Activated naive CD4-positive, alpha-beta T cell treated with anti-CD3 and anti-CD28 coated beads for 36 hours (primary cell): ENCODE measurements at regions of chr11 and their contacts with region 1.

Region 1: GRCh38 chr11:78149646-78150045 is 10.2 kb upstream of the ALG8 start:
- DNase-seq: peak; percentile 41
- H3K4me3 Mint-ChIP-seq: no peak overlapping the region
- H3K27ac Mint-ChIP-seq: no peak overlapping the region
- H3K4me1 Mint-ChIP-seq: no peaks in the 10 kb centered on the region
- H3K27me3 Mint-ChIP-seq: no peaks in the 10 kb centered on the region

Region 2: GRCh38 chr11:78219493-78220217 is 70.0 kb after region 1 on chr11:
- CTCF ChIA-PET with region 1: no interaction called
- intact Hi-C with region 1: loop called (anchors 1 kb)
- DNase-seq: peak; percentile 50
- H3K4me3 Mint-ChIP-seq: no peak overlapping the region
- H3K27ac Mint-ChIP-seq: no peak overlapping the region
- H3K4me1 Mint-ChIP-seq: peaks cover 14% of the 10 kb centered on the region
- H3K27me3 Mint-ChIP-seq: no peaks in the 10 kb centered on the region